ENCODE measurements at regions of chr3 and their contacts with region 1.

Region 1: DNA sequence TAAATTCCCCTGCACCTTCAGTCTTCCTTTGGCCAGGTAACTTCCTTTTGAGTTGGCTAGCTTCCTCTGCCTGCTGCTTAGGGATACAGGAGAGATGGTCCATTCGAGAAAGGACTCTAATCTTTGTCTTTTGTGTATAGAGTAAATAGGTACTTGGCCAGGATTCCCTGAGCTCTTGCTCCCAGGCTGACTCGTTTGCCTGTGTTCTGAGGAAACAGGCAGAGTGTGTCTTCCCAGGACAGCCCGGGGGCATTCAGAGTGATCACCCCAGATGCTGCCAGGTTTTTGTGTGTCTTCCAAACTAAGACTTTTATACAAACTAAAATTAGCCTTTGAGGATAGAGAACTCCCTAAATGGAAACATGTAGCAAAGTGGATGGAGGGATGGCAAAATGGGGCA is 39.5 kb downstream of the TMEM108 start:
- DNase-seq: no peak
- H3K4me3 ChIP-seq: no peak overlapping the region
- H3K27ac ChIP-seq: no peak overlapping the region
- H3K4me1 ChIP-seq: no peaks in the 10 kb centered on the region
- H3K27me3 ChIP-seq: peaks cover 2% of the 10 kb centered on the region
- CTCF ChIP-seq: no peak

Region 2: DNA sequence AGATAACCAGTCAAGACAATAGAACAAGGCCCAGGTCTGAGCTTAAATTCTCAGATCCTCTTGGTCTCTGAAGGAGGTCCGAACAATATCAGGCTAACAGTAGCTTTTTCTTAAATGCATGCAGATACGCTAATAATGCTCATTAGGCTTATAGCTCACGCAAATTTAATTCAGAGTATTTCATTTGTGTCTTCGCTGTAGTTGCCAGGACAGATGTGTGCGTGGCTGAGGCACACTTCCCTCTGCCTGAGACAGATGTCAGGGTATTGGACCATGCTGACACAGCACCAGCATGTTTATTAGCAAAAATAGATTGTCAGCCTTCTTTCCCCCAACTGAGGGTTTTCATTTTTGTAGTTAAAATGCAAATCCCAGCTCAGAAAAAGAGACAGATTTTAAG is 219.3 kb after region 1 on chr3:
- CTCF ChIA-PET with region 1: no interaction called
- POLR2A ChIA-PET with region 1: interaction called, 10 read pairs
- intact Hi-C with region 1: no loop called
- DNase-seq: no peak
- H3K4me3 ChIP-seq: no peak overlapping the region
- H3K27ac ChIP-seq: no peak overlapping the region
- H3K4me1 ChIP-seq: peaks cover 61% of the 10 kb centered on the region
- H3K27me3 ChIP-seq: no peaks in the 10 kb centered on the region
- CTCF ChIP-seq: no peak

Region 3: GRCh38 chr3:133362539-133362938 is 284.9 kb after region 1 on chr3:
- CTCF ChIA-PET with region 1: no interaction called
- POLR2A ChIA-PET with region 1: no interaction called
- intact Hi-C with region 1: no loop called
- DNase-seq: no peak
- H3K4me3 ChIP-seq: no peak overlapping the region
- H3K27ac ChIP-seq: no peak overlapping the region
- H3K4me1 ChIP-seq: no peaks in the 10 kb centered on the region
- H3K27me3 ChIP-seq: peaks cover 28% of the 10 kb centered on the region
- CTCF ChIP-seq: no peak

Region 4: GRCh38 chr3:133895208-133896001 is 817.7 kb after region 1 on chr3 and contains the start of gene RAB6B:
- CTCF ChIA-PET with region 1: no interaction called
- POLR2A ChIA-PET with region 1: no interaction called
- intact Hi-C with region 1: no loop called
- DNase-seq: peak; percentile 54
- H3K4me3 ChIP-seq: peak within 1 kb of the TSS; percentile 59
- H3K27ac ChIP-seq: no peak within 1 kb of the TSS
- H3K4me1 ChIP-seq: peaks cover 5% of the 10 kb centered on the region
- H3K27me3 ChIP-seq: peaks cover 34% of the 10 kb centered on the region
- CTCF ChIP-seq: no peak
- total RNA-seq, gene RAB6B: 0.86 and 0.87 TPM in 2 replicates

Measured in A673 (cell line).